Posterior cingulate gyrus (tissue), 11 donors: ENCODE measurements at regions of chr17 and their contacts with region 1.

Region 1: DNA sequence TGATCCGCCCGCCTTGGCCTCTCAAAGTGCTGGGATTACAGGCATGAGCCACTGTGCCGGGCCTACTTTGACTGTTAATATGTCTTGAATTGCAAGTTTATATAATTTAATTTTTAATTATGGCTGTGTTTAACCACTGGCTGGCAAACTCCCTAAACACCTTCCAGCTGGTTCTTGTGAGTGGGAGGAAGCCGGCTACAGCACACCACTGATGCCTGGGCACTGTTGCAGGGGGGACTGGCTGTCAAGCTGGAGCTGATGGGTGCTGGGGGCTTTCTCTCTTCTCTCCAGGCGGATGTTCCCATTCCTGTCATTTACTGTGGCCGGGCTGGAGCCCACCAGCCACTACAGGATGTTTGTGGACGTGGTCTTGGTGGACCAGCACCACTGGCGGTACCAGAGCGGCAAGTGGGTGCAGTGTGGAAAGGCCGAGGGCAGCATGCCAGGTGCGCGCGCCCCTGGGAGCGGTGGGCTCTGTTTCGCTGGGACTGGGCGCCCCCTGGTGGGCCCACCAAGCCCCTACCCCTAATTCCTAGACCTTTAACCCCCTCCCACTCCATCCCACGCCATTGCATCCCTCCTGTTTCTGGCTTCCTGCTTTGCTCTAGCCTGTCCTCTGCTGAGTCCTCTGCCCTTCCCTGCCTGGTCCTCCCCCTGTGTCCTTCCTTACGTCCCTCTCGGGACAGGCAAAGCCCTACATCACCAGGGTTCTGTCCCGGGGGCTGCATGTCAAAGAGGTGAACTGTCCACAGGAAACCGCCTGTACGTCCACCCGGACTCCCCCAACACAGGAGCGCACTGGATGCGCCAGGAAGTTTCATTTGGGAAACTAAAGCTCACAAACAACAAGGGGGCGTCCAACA is 9.5 kb downstream of the TBX21 start:
- DNase-seq: peak in 3 of 10 donors; percentile 35 to 85 (median 60)

Region 2: DNA sequence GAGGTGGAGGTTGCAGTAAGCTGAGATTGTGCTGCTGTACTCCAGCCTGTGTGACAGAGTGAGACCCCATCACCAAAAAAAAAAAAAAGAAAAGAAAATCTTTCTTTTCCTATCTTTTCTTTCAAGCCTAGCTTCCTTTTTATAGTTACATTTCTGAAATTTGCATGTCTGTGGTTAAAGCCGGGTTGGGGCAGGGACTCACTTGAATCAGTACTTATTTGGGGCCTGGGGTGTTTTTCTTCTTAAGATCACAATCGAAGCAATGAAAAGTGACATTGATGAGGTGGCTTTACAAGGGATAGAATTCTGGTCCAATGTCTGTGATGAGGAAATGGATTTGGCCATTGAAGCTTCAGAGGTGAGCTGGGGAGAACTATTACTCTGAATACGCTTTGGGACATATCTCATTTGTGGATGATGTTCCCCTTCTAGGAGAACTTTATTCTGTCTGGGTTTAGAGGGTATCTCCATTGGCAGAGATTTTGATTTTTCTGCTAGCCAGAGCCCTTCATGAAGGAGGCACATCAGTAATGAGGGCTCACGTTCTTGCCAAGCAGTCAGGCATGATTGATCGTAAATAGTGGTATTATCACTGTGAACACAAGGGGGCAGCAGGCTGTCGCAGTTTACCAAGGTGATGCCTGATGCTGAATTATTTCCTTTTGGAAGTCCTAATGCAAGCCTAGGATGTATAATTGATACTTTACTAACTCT is 78.5 kb before region 1 on chr17:
- intact Hi-C with region 1: loop called (anchors 5 kb)
- DNase-seq: peak in 6 of 10 donors; percentile 25 to 90 (median 58)

Region 3: DNA sequence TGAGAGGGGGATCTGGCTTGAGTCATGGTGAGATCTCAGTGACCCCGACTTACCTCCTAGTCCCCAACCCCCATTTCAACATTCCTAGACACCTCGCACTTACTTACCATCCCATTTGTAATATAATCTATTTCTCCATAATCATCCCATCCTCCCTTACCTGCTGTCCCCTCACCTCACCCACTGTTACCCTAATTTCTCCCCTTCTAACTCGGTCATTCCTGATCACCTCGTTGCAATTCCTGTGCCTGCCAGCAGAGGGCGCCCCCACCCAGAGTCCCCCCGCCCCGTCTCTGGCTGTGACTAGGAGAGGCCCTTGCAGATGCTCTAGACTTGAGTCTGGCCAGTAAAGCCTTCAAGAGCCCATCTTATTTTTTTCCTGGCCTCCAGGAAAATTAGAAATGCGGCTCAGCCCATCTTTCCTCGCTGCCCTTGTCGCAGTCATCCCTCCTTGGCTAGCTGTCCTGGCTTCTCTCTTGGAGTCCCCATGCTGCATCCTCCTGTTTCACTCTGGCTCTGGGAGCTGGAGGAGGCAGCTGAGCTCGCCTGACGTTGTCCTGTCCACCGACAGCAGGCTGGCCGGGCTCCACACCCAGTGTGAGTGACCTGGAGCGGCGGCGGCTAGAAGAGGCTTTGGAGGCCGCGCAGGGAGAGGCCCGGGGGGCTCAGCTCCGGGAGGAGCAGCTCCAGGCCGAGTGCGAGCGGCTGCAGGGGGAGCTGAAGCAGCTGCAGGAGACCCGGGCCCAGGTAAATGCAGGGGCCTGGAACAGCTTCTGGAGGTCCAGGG is 43.6 kb before region 1 on chr17:
- intact Hi-C with region 1: loop called (anchors 5 kb)
- DNase-seq: peak in 9 of 10 donors; percentile 42 to 94 (median 73)

Region 4: GRCh38 chr17:47717261-47717697 is 25.3 kb before region 1 on chr17:
- intact Hi-C with region 1: loop called (anchors 2 kb)
- DNase-seq: no peak